HEK293T (cell line): ENCODE measurements at regions of chr1 and their contacts with region 1.

Region 1: GRCh38 chr1:7747605-7748004 is 23.5 kb upstream of the VAMP3 start:
- DNase-seq: no peak

Region 2: DNA sequence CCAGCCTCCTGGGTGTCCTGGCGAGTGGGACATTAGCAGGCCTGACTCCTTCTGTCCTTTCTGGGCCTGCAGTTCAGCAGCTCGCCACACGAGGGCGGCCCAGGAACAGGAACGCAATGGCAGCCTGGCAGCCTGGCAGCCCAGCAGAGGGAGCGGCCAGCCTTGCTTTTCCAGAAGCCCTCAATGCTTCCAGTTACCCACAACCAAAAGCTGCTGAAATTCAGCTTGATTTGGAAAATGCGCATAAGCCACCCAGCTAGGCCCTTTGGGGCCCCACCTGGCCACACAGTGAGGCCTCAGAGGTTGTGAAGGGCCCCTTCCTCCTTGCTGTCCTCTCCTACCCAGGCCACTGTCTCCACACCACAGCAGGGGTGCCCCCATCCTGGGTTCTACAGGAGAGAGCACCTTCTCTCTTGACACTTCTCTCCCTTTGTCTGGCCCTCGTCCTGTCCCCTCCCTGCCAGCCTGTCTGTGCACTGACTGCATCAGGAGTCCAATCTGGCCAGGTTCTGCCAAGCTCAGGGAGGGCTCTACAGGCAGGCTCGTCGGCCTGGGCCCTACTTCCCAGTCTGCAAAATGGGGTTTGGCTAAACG is 79.9 kb before region 1 on chr1:
- CTCF ChIA-PET with region 1: interaction called, 82 read pairs
- POLR2A ChIA-PET with region 1: interaction called, 4 read pairs
- DNase-seq: peak; percentile 85